ENCODE measurements at regions of chr3 and their contacts with region 1.

Region 1: DNA sequence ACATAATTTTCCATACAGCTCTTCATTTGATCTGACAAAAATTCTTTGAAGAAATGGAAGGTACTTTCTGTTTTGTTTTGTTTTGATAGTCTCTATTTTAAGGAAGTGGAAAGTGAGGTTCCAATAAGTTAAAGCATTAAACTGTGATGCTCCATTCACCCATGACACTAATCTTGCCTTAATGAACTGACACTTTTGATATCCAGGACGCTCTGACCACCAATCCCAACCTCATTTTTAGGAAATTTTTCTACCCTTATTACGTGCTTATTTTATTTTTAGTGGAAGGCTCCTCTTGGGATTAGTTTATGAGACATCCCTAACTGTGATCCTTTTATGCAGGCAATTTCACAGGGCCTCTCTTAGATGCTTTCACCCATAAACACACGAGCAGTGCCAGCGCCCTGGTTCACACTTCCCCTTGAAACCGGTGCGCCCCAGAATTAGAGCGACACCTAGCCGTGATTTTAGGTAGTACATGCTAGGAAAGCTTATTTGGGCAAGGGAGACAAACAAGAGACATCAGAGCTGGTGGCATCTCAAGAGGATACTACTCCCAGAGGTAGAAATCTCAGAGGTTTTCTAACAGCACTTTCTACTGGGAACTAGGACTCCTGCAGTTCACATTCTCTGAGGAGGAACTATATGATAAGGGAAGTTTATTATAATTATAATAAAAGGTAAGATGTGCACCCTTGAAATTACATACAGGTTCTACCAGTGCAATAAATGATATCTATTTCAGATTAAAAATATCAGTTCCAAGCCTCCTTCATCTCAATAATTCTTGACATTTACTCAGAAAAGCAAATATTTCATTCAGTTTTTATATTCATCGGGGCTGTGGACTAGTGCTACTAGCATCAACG is 173.9 kb downstream of the SLC9A9 start:
- DNase-seq: peak; percentile 40 to 86 (median 73)
- ATAC-seq: peak; percentile 96
- H3K4me3 ChIP-seq: no peak overlapping the region
- H3K4me3 Mint-ChIP-seq: peak overlapping the region in 9 of 10 donors; percentile 7 to 73 (median 45)
- H3K27ac ChIP-seq: no peak overlapping the region
- H3K27ac Mint-ChIP-seq: peak overlapping the region in 6 of 9 donors; percentile 14 to 86 (median 57)
- H3K4me1 ChIP-seq: peaks cover 0 to 6% of the 10 kb centered on the region in 2 donors
- H3K4me1 Mint-ChIP-seq: peaks cover 7 to 17% (median 9%) of the 10 kb centered on the region in 7 donors
- H3K27me3 ChIP-seq: no peaks in the 10 kb centered on the region
- H3K27me3 Mint-ChIP-seq: no peaks in the 10 kb centered on the region

Region 2: GRCh38 chr3:142828703-142829305 is 845.5 kb before region 1 on chr3:
- CTCF ChIA-PET with region 1: no interaction called
- POLR2A ChIA-PET with region 1: no interaction called
- intact Hi-C with region 1: loop called (anchors 2 to 5 kb)
- DNase-seq: peak in 8 of 9 donors; percentile 1 to 59 (median 18)
- ATAC-seq: peak; percentile 92
- H3K4me3 ChIP-seq: no peak overlapping the region
- H3K4me3 Mint-ChIP-seq: no peak overlapping the region
- H3K27ac ChIP-seq: no peak overlapping the region
- H3K27ac Mint-ChIP-seq: no peak overlapping the region
- H3K4me1 ChIP-seq: no peaks in the 10 kb centered on the region
- H3K4me1 Mint-ChIP-seq: peaks cover 0 to 3% (median 0%) of the 10 kb centered on the region in 7 donors
- H3K27me3 ChIP-seq: no peaks in the 10 kb centered on the region
- H3K27me3 Mint-ChIP-seq: peaks cover 2 to 22% (median 5%) of the 10 kb centered on the region in 5 donors

Region 3: DNA sequence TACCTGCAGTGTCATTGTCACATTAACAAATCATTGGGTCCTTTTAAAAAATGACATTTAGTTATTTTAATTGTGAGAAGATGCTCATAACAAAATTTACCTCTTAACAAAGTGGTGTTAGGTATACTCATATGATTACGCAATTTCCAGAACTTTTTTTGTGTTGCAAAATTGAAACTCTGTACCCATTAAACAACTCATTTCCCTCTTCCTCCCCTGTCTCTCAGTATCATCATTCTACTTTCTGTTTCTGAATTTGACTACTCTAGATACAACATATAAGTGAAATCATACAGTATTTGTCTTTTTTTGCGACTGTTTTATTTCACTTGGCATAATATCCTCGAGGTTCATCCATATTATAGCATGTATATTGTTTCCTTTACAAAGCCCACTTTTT is 613.4 kb before region 1 on chr3:
- CTCF ChIA-PET with region 1: interaction called, 3 read pairs
- POLR2A ChIA-PET with region 1: no interaction called
- intact Hi-C with region 1: loop called (anchors 5 to 10 kb)
- DNase-seq: no peak
- ATAC-seq: no peak
- H3K4me3 ChIP-seq: no peak overlapping the region
- H3K4me3 Mint-ChIP-seq: peak overlapping the region in 1 of 10 donors; percentile 22
- H3K27ac ChIP-seq: no peak overlapping the region
- H3K27ac Mint-ChIP-seq: peak overlapping the region in 5 of 9 donors; percentile 16 to 84 (median 50)
- H3K4me1 ChIP-seq: no peaks in the 10 kb centered on the region
- H3K4me1 Mint-ChIP-seq: peaks cover 0 to 24% (median 10%) of the 10 kb centered on the region in 7 donors
- H3K27me3 ChIP-seq: no peaks in the 10 kb centered on the region
- H3K27me3 Mint-ChIP-seq: no peaks in the 10 kb centered on the region

Region 4: DNA sequence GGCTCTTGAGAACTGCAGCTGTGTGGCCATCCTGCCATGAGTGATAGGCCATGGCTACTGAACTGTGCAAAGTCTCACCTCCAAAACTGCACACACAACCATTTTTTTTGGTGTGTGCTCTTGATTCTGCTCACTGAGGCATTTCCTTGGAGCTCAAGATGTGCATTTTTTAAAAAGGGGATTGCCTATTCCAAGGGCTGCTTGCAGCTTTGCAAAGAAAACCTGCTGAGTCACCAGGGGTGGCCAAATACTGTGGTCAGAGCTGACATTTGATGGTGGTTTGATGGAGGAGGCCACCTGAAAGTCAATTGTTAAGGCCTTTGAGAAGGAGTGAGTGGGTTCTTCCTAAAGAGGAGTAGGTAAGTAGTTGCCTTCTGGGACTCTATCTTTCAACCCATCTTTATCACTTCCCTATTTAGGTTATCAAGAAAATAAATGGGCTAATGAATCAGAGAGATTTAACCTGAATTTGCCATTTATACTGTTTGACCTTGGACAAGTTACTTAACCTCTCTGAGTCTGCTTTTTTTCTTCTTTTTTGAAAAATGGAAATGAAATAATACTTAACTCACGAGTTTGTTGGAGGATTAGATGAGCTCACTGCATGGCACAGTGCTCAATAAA is 466.9 kb before region 1 on chr3:
- CTCF ChIA-PET with region 1: no interaction called
- POLR2A ChIA-PET with region 1: no interaction called
- intact Hi-C with region 1: loop called in 1 of 2 experiments (anchors 10 kb)
- DNase-seq: peak in 1 of 9 donors; percentile 25
- ATAC-seq: no peak
- H3K4me3 ChIP-seq: no peak overlapping the region
- H3K4me3 Mint-ChIP-seq: no peak overlapping the region
- H3K27ac ChIP-seq: no peak overlapping the region
- H3K27ac Mint-ChIP-seq: no peak overlapping the region
- H3K4me1 ChIP-seq: no peaks in the 10 kb centered on the region
- H3K4me1 Mint-ChIP-seq: peaks cover 0 to 18% (median 4%) of the 10 kb centered on the region in 7 donors
- H3K27me3 ChIP-seq: no peaks in the 10 kb centered on the region
- H3K27me3 Mint-ChIP-seq: no peaks in the 10 kb centered on the region

Region 5: GRCh38 chr3:143443851-143444331 is 230.4 kb before region 1 on chr3:
- CTCF ChIA-PET with region 1: no interaction called
- POLR2A ChIA-PET with region 1: no interaction called
- intact Hi-C with region 1: no loop called
- DNase-seq: peak in 1 of 9 donors; percentile 30
- ATAC-seq: peak; percentile 90
- H3K4me3 ChIP-seq: no peak overlapping the region
- H3K4me3 Mint-ChIP-seq: peak overlapping the region in 7 of 10 donors; percentile 9 to 51 (median 26)
- H3K27ac ChIP-seq: no peak overlapping the region
- H3K27ac Mint-ChIP-seq: peak overlapping the region in 2 of 9 donors; percentile 9 to 58
- H3K4me1 ChIP-seq: peaks cover 7 to 18% of the 10 kb centered on the region in 2 donors
- H3K4me1 Mint-ChIP-seq: peaks cover 19 to 27% (median 27%) of the 10 kb centered on the region in 7 donors
- H3K27me3 ChIP-seq: no peaks in the 10 kb centered on the region
- H3K27me3 Mint-ChIP-seq: no peaks in the 10 kb centered on the region

Region 6: GRCh38 chr3:143751643-143752178 is 77.4 kb after region 1 on chr3:
- CTCF ChIA-PET with region 1: interaction called, 6 read pairs
- POLR2A ChIA-PET with region 1: interaction called, 3 read pairs
- intact Hi-C with region 1: loop called in 1 of 2 experiments (anchors 5 kb)
- DNase-seq: peak; percentile 12 to 83 (median 75)
- ATAC-seq: peak; percentile 80
- H3K4me3 ChIP-seq: peak overlapping the region; percentile 42
- H3K4me3 Mint-ChIP-seq: peak overlapping the region; percentile 67 to 89 (median 78)
- H3K27ac ChIP-seq: peak overlapping the region; percentile 63
- H3K27ac Mint-ChIP-seq: peak overlapping the region; percentile 88 to 100 (median 94)
- H3K4me1 ChIP-seq: peaks cover 16 to 35% of the 10 kb centered on the region in 2 donors
- H3K4me1 Mint-ChIP-seq: peaks cover 20 to 71% (median 68%) of the 10 kb centered on the region in 7 donors
- H3K27me3 ChIP-seq: no peaks in the 10 kb centered on the region
- H3K27me3 Mint-ChIP-seq: no peaks in the 10 kb centered on the region

Measured in naive thymus-derived CD4-positive, alpha-beta T cell (primary cell).